Adrenal gland (tissue), 19 donors: ENCODE measurements at regions of chr9 and their contacts with region 1.

Region 1: DNA sequence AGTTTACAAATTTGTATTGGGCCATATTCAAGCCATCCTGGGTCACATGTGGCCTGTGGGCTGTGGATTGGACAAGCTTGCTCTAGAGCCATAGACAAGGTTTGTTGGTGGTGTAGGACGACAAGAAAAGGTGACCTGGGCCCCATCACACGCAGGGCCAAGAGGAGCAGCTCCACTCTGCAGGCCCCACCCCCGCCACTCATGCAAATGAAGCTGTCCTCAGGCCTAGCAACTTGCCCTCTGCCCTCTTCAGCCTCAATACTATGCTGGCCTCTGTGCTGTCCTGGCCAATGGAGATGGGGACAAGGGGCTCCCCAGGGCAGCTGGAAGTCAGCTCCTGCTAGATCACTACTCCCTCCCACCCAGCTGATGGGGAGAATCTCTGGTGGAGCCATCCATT is 55.2 kb upstream of the TMEM252 start:
- DNase-seq: no peak
- H3K4me3 ChIP-seq: no peak overlapping the region
- H3K27ac ChIP-seq: no peak overlapping the region
- H3K4me1 ChIP-seq: no peaks in the 10 kb centered on the region
- H3K27me3 ChIP-seq: no peaks in the 10 kb centered on the region
- CTCF ChIP-seq: no peak
- POLR2A ChIP-seq: no peak

Region 2: GRCh38 chr9:68522131-68522530 is 73.7 kb before region 1 on chr9:
- intact Hi-C with region 1: no loop called
- DNase-seq: no peak
- H3K4me3 ChIP-seq: no peak overlapping the region
- H3K27ac ChIP-seq: no peak overlapping the region
- H3K4me1 ChIP-seq: no peaks in the 10 kb centered on the region
- H3K27me3 ChIP-seq: no peaks in the 10 kb centered on the region
- CTCF ChIP-seq: no peak
- POLR2A ChIP-seq: no peak

Region 3: DNA sequence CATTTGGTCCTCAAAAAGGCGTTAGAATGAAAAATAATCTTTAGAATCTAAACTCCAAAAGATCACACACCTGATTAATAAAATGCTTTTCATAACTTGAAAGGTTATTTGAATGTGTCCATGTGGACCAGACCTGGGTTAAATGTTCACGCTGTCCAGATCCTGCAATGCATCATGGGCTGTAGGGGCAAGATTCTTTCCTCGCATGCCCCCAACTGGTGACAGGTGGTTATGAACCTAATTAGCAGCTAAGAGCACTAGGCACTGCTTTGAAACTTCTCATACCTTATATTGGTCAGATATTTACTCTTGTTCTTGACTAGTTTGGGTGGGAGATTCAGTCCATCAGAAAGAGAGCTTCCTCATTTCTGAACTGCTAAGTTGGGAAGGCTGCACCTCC is 89.9 kb after region 1 on chr9:
- intact Hi-C with region 1: loop called in 1 of 2 experiments (anchors 10 kb)
- DNase-seq: peak in 3 of 7 donors; percentile 18 to 41 (median 25)
- H3K4me3 ChIP-seq: no peak overlapping the region
- H3K27ac ChIP-seq: no peak overlapping the region
- H3K4me1 ChIP-seq: no peaks in the 10 kb centered on the region
- H3K27me3 ChIP-seq: peaks cover 7% of the 10 kb centered on the region
- CTCF ChIP-seq: peak in 4 of 6 experiments; percentile 18 to 32 (median 29)
- POLR2A ChIP-seq: no peak